WTC11 (cell line): ENCODE measurements at regions of chr14 and their contacts with region 1.

Region 1: DNA sequence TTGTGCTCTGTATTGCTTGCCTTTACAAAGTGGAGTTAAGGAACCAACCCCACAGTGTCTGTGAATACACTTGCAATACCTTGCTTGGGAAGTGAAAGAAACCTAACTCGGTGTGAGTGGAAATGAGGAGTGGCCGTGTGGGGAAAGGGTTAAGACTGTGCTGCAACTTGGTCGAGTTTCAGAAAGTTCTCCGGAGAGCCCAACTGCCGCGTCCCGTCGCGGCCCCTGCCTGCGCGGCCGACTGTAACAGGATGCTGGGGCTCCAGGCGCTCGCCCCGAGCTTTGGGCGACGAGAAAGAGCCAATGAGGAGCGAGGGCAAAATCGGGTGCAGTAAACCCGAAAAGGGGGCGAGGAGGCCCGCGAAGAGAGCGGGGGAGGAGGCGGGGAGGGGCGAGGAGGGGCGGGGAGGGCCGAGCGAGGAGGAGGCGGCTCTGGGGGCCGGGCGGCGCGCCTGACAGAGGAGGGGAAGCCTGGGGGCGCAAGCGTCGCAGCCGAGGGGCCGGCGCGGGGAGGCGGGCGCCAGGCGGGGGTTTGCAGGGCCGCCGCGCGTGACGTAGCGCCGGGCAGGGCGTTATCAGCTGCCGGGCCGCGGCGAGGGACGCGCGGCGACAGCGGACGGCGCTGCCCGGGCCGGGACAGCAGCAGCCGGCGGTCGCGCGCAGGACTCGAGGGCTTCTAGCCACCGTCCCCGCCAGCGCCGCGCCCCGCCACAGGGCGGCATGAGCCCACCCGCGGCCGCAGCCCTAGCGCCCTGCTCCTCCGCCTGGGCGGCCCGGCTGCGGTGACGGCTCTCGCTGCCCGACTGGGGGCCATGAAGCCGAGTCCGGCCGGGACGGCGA is at the start of gene DACT1:
- DNase-seq: peak; percentile 76
- ATAC-seq: peak; percentile 68
- H3K4me3 Mint-ChIP-seq: peak within 1 kb of the TSS; percentile 84
- H3K27ac Mint-ChIP-seq: peak within 1 kb of the TSS; percentile 71
- H3K4me1 Mint-ChIP-seq: peaks cover 65% of the 10 kb centered on the region
- H3K27me3 Mint-ChIP-seq: peaks cover 25% of the 10 kb centered on the region
- CTCF ChIP-seq: no peak
- total RNA-seq, gene DACT1: 19.8 to 21.2 TPM (median 20.2 TPM) in 3 replicates

Region 2: DNA sequence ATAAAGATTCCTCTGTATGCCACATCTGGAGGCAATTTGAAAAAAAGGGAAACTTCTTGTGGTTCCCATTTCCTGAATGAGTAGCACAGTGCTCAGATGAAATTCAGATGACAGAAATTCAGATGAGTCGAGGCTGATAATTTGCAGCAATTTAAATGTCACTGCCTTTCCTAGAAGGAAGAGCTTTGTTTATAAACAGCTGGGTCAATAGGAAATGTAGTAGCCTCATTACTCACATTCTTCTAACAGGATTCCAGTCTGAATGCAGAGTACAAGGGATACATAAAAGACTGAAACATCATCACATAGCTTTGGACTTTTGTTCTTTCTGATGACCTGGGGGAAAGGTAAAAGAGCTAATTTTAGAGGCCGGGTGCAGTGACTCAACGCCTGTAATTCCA is 11.2 kb before region 1 on chr14:
- CTCF ChIA-PET with region 1: interaction called, 33 read pairs
- POLR2A ChIA-PET with region 1: no interaction called
- DNase-seq: no peak
- ATAC-seq: no peak
- H3K4me3 Mint-ChIP-seq: no peak overlapping the region
- H3K27ac Mint-ChIP-seq: peak overlapping the region; percentile 82
- H3K4me1 Mint-ChIP-seq: peaks cover 84% of the 10 kb centered on the region
- H3K27me3 Mint-ChIP-seq: peaks cover 20% of the 10 kb centered on the region
- CTCF ChIP-seq: no peak

Region 3: GRCh38 chr14:58826845-58827686 is 189.5 kb after region 1 on chr14:
- CTCF ChIA-PET with region 1: interaction called, 14 read pairs
- POLR2A ChIA-PET with region 1: no interaction called
- DNase-seq: no peak
- ATAC-seq: no peak
- H3K4me3 Mint-ChIP-seq: no peak overlapping the region
- H3K27ac Mint-ChIP-seq: no peak overlapping the region
- H3K4me1 Mint-ChIP-seq: peaks cover 4% of the 10 kb centered on the region; the same call in 1 of the 2 replicates
- H3K27me3 Mint-ChIP-seq: no peaks in the 10 kb centered on the region
- CTCF ChIP-seq: peak; percentile 48